Activated naive CD8-positive, alpha-beta T cell treated with anti-CD3 and anti-CD28 coated beads, Interleukin-2, amount 10 ng/mL, durations not matched to agents 7 days and 5 days (primary cell): ENCODE measurements at regions of chr4 and their contacts with region 1.

Region 1: GRCh38 chr4:6898763-6899162 is 10.9 kb upstream of the TBC1D14 start:
- DNase-seq: no peak
- ATAC-seq: peak; percentile 10
- H3K4me3 Mint-ChIP-seq: peak overlapping the region; percentile 68
- H3K27ac Mint-ChIP-seq: peak overlapping the region; percentile 95
- H3K4me1 Mint-ChIP-seq: peaks cover 24% of the 10 kb centered on the region
- H3K27me3 Mint-ChIP-seq: no peaks in the 10 kb centered on the region

Region 2: DNA sequence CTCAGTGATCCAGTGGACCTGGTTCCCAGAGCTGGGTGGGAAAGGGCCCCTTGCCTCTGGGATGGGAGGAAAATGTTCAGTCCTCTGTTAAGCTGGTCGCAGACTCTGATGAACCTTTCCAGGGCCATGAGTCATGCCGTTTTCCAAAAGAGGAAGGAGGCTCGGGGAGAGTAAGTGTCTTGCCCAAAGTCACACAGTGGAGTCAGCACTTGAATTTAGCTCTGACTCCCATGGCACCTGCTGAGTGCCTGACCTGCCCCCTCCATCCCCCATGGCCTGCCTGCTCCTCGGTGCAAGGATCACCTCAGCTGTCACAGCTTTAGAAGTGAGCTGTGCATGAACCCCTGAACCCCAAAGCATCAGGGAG is 130.2 kb before region 1 on chr4:
- POLR2A ChIA-PET with region 1: no interaction called
- DNase-seq: no peak
- ATAC-seq: no peak
- H3K4me3 Mint-ChIP-seq: peak overlapping the region; percentile 14
- H3K27ac Mint-ChIP-seq: peak overlapping the region; percentile 50
- H3K4me1 Mint-ChIP-seq: peaks cover 19% of the 10 kb centered on the region
- H3K27me3 Mint-ChIP-seq: no peaks in the 10 kb centered on the region

Region 3: GRCh38 chr4:6942238-6942800 is 43.6 kb after region 1 on chr4:
- POLR2A ChIA-PET with region 1: interaction called, 10 read pairs
- DNase-seq: peak; percentile 45
- ATAC-seq: peak; percentile 78
- H3K4me3 Mint-ChIP-seq: peak overlapping the region; percentile 59
- H3K27ac Mint-ChIP-seq: peak overlapping the region; percentile 84
- H3K4me1 Mint-ChIP-seq: peaks cover 39% of the 10 kb centered on the region
- H3K27me3 Mint-ChIP-seq: no peaks in the 10 kb centered on the region